RWPE1 (cell line): ENCODE measurements at regions of chr6 and their contacts with region 1.

Region 1: GRCh38 chr6:114108119-114109002 is 137.4 kb upstream of the HDAC2 start:
- DNase-seq: peak; percentile 53
- H3K27ac ChIP-seq: no peak overlapping the region
- CTCF ChIP-seq: peak; percentile 75

Region 2: DNA sequence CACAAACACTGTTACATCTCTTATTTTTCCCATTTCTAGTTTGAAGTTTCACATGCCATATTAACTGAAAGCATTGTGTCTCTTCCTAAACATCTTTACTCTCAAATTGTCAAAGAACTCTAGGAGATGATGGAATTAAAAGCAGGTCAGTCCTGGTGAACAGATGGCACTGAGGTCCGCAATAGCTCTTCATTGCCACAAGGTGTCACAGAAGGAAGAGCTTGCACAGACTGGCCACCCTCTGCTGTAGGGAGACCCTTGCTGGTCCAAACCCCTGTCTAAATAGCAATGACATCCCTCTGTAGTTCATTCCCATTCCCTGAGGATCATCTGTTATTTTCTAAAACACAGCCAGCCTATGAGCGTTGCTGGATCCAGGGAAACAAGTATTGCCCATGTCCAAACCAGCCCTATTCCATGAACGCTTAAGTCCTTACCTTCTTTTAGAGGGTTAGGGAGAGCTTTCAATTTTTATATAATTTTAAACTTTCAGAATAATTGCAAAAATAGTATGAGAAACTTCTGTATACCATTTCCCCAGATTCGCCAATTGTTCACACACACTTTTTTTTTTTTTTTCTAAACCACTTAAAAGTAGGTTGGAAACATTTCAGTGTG is 127.3 kb before region 1 on chr6:
- CTCF ChIA-PET with region 1: interaction called, 14 read pairs
- POLR2A ChIA-PET with region 1: no interaction called
- DNase-seq: peak; percentile 42
- H3K27ac ChIP-seq: no peak overlapping the region
- CTCF ChIP-seq: peak; percentile 52

Region 3: GRCh38 chr6:113994918-113995342 is 113.4 kb before region 1 on chr6:
- CTCF ChIA-PET with region 1: interaction called, 22 read pairs
- POLR2A ChIA-PET with region 1: no interaction called
- DNase-seq: peak; percentile 78
- H3K27ac ChIP-seq: no peak overlapping the region
- CTCF ChIP-seq: peak; percentile 48